Activated T-helper 1 cell treated with anti-CD3 and anti-CD28 coated beads, Interleukin-12 subunit alpha, Interleukin-12 subunit beta, Interleukin-2, Interleukin-4 antibody, amounts not matched to agents 30 ng/mL and 10 ng/mL and 1 ng/mL, durations not matched to agents 14 hours and 24 hours and 36 hours (primary cell): ENCODE measurements at regions of chr16 and their contacts with region 1.

Region 1: DNA sequence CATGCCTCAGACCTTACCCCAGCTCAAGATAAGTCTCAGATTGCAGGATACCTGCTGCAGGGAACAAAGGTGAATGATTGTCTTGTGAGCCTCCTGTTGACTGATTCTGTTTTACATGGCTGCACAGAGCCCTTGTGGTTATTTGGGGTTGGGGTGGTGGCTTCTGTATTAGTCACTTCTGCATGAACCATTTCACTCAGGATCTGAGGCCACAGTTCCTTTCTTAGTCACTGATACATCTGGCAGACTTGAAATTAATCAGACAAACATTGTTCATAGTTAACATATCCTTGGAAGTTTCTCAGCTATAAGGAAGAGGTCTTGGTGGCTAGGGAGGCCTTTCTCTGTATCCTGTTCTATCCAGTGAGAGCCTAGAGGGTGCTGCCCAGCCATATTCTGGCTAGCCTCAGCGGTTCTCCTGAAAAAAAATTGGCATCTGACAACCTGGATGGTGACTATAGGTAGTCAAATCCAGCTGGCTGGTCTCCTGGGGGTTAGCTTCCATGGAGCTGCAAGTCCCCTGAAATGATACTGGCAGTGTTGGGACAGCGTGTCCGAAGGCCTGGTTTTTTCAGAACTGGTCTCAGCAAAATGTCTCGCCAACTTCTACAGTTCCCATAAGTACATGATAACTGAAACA is 8.4 kb upstream of the PLK1 start:
- DNase-seq: peak; percentile 62
- H3K4me3 Mint-ChIP-seq: no peak overlapping the region
- H3K27ac Mint-ChIP-seq: peak overlapping the region; percentile 38
- H3K4me1 Mint-ChIP-seq: peaks cover 29% of the 10 kb centered on the region
- H3K27me3 Mint-ChIP-seq: no peaks in the 10 kb centered on the region

Region 2: GRCh38 chr16:23504451-23505179 is 165.6 kb before region 1 on chr16:
- intact Hi-C with region 1: loop called (anchors 2 kb)
- DNase-seq: peak; percentile 68
- H3K4me3 Mint-ChIP-seq: peak overlapping the region; percentile 46
- H3K27ac Mint-ChIP-seq: peak overlapping the region; percentile 79
- H3K4me1 Mint-ChIP-seq: peaks cover 72% of the 10 kb centered on the region
- H3K27me3 Mint-ChIP-seq: no peaks in the 10 kb centered on the region

Region 3: DNA sequence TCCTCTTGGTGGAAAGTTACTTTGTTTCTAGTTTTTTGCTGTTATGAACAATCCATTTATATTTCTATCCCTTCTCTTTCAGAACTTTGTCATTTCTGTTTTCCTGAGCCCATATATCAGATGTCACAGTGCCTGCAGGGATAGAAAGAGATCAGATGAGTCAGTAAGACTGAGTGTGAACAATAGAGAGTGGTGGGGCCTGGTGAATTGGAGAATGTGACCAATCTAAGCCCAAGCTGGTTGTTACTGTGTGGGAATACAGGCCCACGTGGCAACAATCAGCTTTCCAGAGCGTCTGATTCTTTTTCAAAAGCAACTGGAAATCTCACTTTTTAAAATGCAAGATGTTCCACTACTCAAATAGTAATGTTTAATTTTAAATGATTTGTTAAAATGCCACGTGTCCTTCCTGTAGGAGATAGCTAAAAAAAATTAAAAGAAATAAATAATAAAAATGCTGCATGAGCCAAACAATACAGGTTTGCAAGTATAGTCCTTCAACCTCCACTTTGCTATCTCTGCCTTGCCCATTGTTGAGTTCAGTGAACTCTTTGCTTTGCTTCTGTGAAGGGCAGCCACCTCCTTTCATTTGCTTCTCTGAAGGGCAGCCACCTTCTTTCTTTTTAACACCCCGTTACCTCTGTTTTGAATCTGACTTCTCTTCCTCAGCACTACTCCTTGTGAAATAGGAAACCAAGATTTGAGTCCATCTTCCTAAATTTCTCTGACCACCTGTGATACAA is 19.4 kb before region 1 on chr16:
- intact Hi-C with region 1: loop called (anchors 1 kb)
- DNase-seq: no peak
- H3K4me3 Mint-ChIP-seq: no peak overlapping the region
- H3K27ac Mint-ChIP-seq: peak overlapping the region; percentile 61
- H3K4me1 Mint-ChIP-seq: peaks cover 47% of the 10 kb centered on the region
- H3K27me3 Mint-ChIP-seq: no peaks in the 10 kb centered on the region